Naive thymus-derived CD4-positive, alpha-beta T cell (primary cell): ENCODE measurements at regions of chr2 and their contacts with region 1.

Region 1: DNA sequence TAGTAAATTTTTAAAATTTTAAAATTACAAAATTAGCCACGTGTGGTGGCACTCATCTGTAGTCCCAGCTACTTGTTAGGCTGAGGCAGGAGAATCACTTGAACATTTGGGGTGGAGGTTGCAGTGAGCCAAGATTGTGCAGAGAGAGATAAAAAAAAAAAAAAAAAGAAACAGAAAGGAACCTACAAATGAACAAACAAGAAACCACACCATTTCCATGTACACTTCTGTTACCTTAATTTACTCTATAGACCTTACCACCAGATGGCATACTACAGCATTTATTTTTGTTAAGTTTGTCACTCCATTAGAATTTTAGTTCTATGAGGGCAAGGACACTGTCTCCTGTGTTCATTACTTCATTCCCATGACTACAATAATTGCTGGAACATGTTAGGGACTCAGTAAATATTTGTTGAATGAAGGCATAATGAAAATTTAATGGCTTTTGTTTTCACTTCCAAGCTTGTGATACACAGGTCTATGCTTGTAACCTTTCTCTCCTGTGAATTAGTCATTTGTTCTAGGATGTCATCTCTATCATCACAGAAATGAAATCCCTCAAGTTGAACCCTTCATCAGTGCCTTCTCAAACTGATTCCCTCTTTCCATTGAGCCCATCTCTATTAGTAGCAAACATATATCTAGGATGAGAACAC is 76.0 kb downstream of the ARHGAP15 start:
- DNase-seq: peak in 7 of 9 donors; percentile 13 to 58 (median 44)
- ATAC-seq: peak; percentile 77
- H3K4me3 ChIP-seq: no peak overlapping the region
- H3K4me3 Mint-ChIP-seq: peak overlapping the region in 6 of 10 donors; percentile 0 to 58 (median 16)
- H3K27ac ChIP-seq: no peak overlapping the region
- H3K27ac Mint-ChIP-seq: peak overlapping the region in 8 of 9 donors; percentile 10 to 90 (median 58)
- H3K4me1 ChIP-seq: peaks cover 28 to 34% of the 10 kb centered on the region in 2 donors
- H3K4me1 Mint-ChIP-seq: peaks cover 30 to 85% (median 78%) of the 10 kb centered on the region in 7 donors
- H3K27me3 ChIP-seq: no peaks in the 10 kb centered on the region
- H3K27me3 Mint-ChIP-seq: no peaks in the 10 kb centered on the region

Region 2: DNA sequence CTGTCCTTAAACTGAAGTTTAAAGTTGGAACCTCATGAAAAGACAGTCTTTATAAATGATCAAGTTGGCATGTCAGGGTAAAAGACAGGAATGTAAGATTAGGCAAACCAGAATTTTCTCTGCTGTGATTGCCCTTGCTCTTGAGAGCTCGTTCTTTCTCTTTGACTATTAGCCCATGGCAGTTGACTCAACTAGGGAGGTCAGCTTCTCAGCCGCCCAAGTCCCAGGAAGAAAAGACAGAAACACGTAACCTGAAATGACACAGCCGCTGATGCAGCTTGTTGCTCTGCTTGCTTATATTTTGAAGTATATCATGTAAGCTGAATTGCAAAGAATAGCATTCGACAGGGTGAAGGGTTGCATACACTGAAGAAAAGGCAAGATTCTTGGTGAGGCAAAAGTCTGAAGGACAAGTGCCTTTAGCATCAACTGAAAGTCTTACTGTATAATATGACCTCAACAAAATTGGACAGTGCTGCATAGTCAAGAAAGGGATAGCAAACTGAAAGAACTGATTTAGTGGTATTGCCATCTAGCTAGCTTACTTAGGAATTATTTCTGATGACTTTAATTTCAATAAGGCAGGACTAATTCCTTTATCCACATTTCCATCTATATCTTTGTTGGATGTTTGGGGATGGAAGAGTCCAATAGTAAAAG is 21.3 kb before region 1 on chr2:
- CTCF ChIA-PET with region 1: interaction called, 3 read pairs
- POLR2A ChIA-PET with region 1: no interaction called
- intact Hi-C with region 1: loop called in 1 of 2 experiments (anchors 2 kb)
- DNase-seq: no peak
- ATAC-seq: no peak
- H3K4me3 ChIP-seq: no peak overlapping the region
- H3K4me3 Mint-ChIP-seq: peak overlapping the region in 2 of 10 donors; percentile 2 to 25
- H3K27ac ChIP-seq: no peak overlapping the region
- H3K27ac Mint-ChIP-seq: peak overlapping the region in 4 of 9 donors; percentile 24 to 61 (median 54)
- H3K4me1 ChIP-seq: peaks cover 13 to 15% of the 10 kb centered on the region in 2 donors
- H3K4me1 Mint-ChIP-seq: peaks cover 29 to 89% (median 78%) of the 10 kb centered on the region in 7 donors
- H3K27me3 ChIP-seq: no peaks in the 10 kb centered on the region
- H3K27me3 Mint-ChIP-seq: no peaks in the 10 kb centered on the region

Region 3: DNA sequence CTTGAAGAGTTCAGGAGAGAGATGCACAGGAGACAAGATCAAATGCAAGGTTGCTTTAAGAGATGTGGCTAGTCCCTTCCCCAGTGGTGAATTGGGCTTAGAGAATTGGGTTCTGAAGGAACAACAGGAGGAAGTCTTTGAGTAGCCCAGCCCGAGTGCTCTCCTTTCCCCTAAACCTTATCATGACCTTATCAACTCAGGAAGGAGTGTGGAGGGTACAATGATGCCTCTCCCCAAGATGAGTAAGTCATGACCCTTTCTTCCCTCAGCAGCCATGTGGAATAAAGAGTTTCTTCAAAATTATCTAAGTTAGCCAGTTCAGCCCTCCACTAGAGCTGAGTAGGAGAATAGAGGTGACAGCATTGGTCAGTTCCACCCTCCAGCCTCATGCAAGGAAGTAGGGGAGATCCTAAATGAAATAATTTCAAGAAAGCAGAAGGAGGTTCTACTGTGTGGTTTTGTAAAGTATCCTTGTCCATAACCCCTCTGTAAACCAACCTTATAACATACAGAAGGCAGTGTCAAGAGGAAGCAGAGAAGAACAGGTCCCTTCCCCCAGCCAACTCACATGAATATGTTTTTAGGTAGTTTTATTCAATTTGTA is 12.4 kb after region 1 on chr2:
- CTCF ChIA-PET with region 1: interaction called, 6 read pairs
- POLR2A ChIA-PET with region 1: no interaction called
- intact Hi-C with region 1: loop called (anchors 1 kb)
- DNase-seq: no peak
- ATAC-seq: peak; percentile 75
- H3K4me3 ChIP-seq: no peak overlapping the region
- H3K4me3 Mint-ChIP-seq: peak overlapping the region in 3 of 10 donors; percentile 10 to 31 (median 25)
- H3K27ac ChIP-seq: no peak overlapping the region
- H3K27ac Mint-ChIP-seq: peak overlapping the region; percentile 17 to 85 (median 53)
- H3K4me1 ChIP-seq: peaks cover 4 to 5% of the 10 kb centered on the region in 2 donors
- H3K4me1 Mint-ChIP-seq: peaks cover 29 to 81% (median 67%) of the 10 kb centered on the region in 7 donors
- H3K27me3 ChIP-seq: no peaks in the 10 kb centered on the region
- H3K27me3 Mint-ChIP-seq: no peaks in the 10 kb centered on the region

Region 4: DNA sequence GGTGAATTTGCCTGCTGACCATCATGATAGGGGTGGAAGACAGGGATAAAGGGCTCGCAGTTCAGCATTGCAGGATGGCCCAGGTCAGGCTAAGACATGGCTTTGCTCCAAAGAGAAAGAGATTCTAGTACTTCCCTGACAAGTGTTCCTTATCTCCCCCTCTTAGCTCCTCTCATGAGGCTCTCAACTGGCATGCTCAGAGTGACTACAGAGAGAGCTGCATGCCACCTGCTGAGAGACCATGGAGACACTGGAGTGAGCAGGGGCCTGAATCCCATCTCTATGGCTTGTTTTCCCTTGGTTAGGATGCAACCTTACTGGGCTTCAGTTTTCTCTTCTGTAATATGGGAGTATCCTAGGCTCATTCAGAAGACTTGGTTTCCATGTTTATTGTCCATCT is 18.3 kb after region 1 on chr2:
- CTCF ChIA-PET with region 1: interaction called, 6 read pairs
- POLR2A ChIA-PET with region 1: no interaction called
- intact Hi-C with region 1: loop called (anchors 1 to 2 kb)
- DNase-seq: no peak
- ATAC-seq: no peak
- H3K4me3 ChIP-seq: no peak overlapping the region
- H3K4me3 Mint-ChIP-seq: no peak overlapping the region
- H3K27ac ChIP-seq: no peak overlapping the region
- H3K27ac Mint-ChIP-seq: peak overlapping the region in 8 of 9 donors; percentile 14 to 84 (median 64)
- H3K4me1 ChIP-seq: peaks cover 10 to 18% of the 10 kb centered on the region in 2 donors
- H3K4me1 Mint-ChIP-seq: peaks cover 27 to 71% (median 65%) of the 10 kb centered on the region in 7 donors
- H3K27me3 ChIP-seq: no peaks in the 10 kb centered on the region
- H3K27me3 Mint-ChIP-seq: no peaks in the 10 kb centered on the region